Activated CD4-positive, alpha-beta memory T cell treated with anti-CD3 and anti-CD28 coated beads, Interleukin-2, amount 10 ng/mL, durations not matched to agents 7 days and 5 days (primary cell): ENCODE measurements at regions of chr15 and their contacts with region 1.

Region 1: DNA sequence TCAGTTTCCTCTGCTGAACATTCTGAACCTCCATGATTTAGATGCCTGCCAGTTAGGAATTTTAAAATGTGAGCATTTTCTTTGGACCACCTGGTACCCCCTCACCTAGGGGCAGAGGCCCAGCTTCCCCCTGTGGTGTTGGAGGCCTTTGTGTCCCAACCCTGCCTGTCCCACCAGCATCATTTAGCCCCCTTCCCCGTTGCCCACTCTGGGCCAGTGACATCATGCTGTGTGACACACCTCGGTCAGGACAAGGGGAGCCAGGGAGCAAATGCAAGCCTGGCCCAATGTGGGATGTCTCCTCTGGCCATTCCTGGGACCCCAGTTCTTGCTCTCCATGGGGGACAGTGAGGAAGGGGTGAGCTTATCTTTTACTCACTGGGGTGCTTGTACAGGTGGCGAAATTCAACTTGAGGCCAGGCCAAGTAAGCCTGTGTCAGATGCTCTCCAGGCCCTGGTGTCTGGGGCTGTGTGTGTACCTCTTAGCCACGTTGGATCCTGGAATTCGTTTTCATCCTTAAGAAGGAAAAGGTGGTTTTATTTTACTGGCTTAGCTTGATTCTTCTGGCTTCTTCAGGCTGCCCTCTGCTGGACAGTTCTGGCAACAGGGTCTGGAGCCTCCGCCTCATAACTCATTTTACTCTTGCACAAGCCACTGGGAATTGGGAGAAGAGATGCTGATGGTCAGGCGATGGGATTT is 49.7 kb upstream of the MYZAP start:
- DNase-seq: peak; percentile 35
- H3K4me3 Mint-ChIP-seq: no peak overlapping the region
- H3K27ac Mint-ChIP-seq: no peak overlapping the region
- H3K4me1 Mint-ChIP-seq: peaks cover 2% of the 10 kb centered on the region
- H3K27me3 Mint-ChIP-seq: peaks cover 9% of the 10 kb centered on the region

Region 2: DNA sequence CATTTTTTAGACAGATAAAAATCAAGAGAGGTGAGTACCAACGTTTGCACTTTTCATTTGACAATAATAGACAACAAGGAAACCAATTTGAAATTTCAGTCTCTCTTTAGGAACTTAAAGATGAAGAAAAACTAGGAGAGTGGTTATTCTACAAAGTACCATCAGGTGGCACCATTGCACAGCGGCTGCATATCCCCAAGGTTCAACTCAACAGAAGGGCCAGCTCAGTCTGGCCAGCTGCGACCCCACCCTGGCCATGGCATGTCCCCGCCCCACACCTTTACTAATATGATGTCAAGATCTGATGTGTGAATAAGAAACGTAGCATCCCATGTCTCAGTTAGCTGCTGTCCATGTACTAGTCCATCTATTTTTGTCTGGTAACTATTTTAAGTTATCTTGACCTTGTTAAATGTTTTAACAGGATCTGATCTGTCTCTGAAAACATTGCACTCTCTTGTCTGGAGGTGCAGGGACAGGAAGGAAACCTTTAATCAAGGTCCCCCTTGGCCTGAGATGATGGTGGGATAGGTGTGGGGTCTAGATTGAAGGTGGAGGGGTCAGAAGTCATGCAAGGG is 201.2 kb before region 1 on chr15:
- CTCF ChIA-PET with region 1: interaction called, 16 read pairs
- POLR2A ChIA-PET with region 1: no interaction called
- DNase-seq: peak; percentile 36
- H3K4me3 Mint-ChIP-seq: no peak overlapping the region
- H3K27ac Mint-ChIP-seq: no peak overlapping the region
- H3K4me1 Mint-ChIP-seq: no peaks in the 10 kb centered on the region
- H3K27me3 Mint-ChIP-seq: peaks cover 8% of the 10 kb centered on the region

Region 3: GRCh38 chr15:57458356-57458781 is 83.6 kb before region 1 on chr15:
- CTCF ChIA-PET with region 1: no interaction called
- POLR2A ChIA-PET with region 1: no interaction called
- DNase-seq: no peak
- H3K4me3 Mint-ChIP-seq: no peak overlapping the region
- H3K27ac Mint-ChIP-seq: no peak overlapping the region
- H3K4me1 Mint-ChIP-seq: no peaks in the 10 kb centered on the region
- H3K27me3 Mint-ChIP-seq: peaks cover 8% of the 10 kb centered on the region

Region 4: GRCh38 chr15:57476533-57476975 is 65.4 kb before region 1 on chr15:
- CTCF ChIA-PET with region 1: no interaction called
- POLR2A ChIA-PET with region 1: no interaction called
- DNase-seq: no peak
- H3K4me3 Mint-ChIP-seq: no peak overlapping the region
- H3K27ac Mint-ChIP-seq: no peak overlapping the region
- H3K4me1 Mint-ChIP-seq: no peaks in the 10 kb centered on the region
- H3K27me3 Mint-ChIP-seq: peaks cover 20% of the 10 kb centered on the region

Region 5: GRCh38 chr15:57565311-57565710 is 23.4 kb after region 1 on chr15:
- CTCF ChIA-PET with region 1: no interaction called
- POLR2A ChIA-PET with region 1: no interaction called
- DNase-seq: peak; percentile 33
- H3K4me3 Mint-ChIP-seq: peak overlapping the region; percentile 11
- H3K27ac Mint-ChIP-seq: peak overlapping the region; percentile 17
- H3K4me1 Mint-ChIP-seq: peaks cover 47% of the 10 kb centered on the region
- H3K27me3 Mint-ChIP-seq: peaks cover 13% of the 10 kb centered on the region